Uterus (tissue), 4 donors: ENCODE measurements at regions of chr12 and their contacts with region 1.

Region 1: GRCh38 chr12:21831791-21832344 is 57.4 kb upstream of the KCNJ8 start:
- DNase-seq: peak; percentile 77 to 88
- H3K4me3 ChIP-seq: no peak overlapping the region
- H3K27ac ChIP-seq: peak overlapping the region; percentile 91 to 95
- H3K4me1 ChIP-seq: peaks cover 0 to 13% of the 10 kb centered on the region in 2 donors
- H3K27me3 ChIP-seq: no peaks in the 10 kb centered on the region
- CTCF ChIP-seq: no peak
- POLR2A ChIP-seq: no peak

Region 2: GRCh38 chr12:21940549-21941505 is 109.0 kb after region 1 on chr12 and contains the start of gene ABCC9:
- intact Hi-C with region 1: loop called (anchors 10 kb)
- DNase-seq: peak; percentile 63 to 71
- H3K4me3 ChIP-seq: peak within 1 kb of the TSS; percentile 46 to 52
- H3K27ac ChIP-seq: peak within 1 kb of the TSS; percentile 91
- H3K4me1 ChIP-seq: peaks cover 0 to 4% of the 10 kb centered on the region in 2 donors
- H3K27me3 ChIP-seq: no peaks in the 10 kb centered on the region
- CTCF ChIP-seq: peak in 1 of 4 experiments; percentile 17
- POLR2A ChIP-seq: peak in 1 of 2 donors; percentile 45
- total RNA-seq, gene ABCC9: 39.7 to 118 (median 78.4) TPM